CD4-positive, alpha-beta memory T cell (primary cell): ENCODE measurements at regions of chr17 and their contacts with region 1.

Region 1: DNA sequence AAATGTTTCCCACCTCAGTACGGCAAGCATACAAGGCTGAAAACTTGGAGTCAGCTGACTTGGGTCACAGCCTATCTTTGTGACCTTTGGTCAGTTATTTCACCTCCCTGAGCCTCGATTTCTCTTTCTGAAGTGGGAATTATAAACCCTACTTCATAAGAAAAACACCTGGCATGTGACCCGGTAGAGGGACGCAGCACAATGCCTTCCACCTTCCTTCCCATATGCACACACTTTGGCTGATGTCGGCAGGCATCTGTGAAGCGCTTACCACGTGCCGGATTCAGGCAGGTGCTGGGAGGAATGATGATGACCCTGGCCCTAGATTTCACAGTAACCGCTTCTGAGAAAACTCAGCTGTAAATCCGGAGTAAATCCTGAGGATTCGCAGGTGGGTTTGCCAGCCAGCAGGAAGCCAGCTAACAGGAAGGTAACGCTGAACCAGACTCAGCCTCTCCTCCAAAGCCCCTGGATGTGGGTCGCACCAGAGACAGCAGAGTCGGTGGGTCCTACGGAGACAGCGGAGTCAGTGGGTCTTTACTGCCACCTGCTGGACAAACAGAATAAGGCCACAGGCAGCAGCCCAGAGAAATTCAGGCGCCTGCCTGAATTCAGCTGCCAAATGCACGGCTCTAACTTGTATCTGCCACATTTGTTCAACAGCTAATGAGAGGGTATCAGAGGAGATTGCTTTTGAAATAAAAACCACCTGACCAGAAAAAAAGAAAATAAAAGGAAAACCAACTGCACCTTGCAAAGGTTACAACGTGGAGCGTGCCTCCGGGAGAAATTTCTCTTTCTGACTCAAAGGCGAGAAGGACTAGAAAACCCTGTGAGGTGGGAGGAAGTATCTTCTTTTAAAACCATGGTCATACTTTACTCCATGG is 16.6 kb downstream of the COPRS start:
- DNase-seq: peak; percentile 53 to 60 (median 58)
- H3K4me3 ChIP-seq: no peak overlapping the region
- H3K4me3 Mint-ChIP-seq: no peak overlapping the region
- H3K27ac ChIP-seq: no peak overlapping the region
- H3K27ac Mint-ChIP-seq: no peak overlapping the region
- H3K4me1 ChIP-seq: peaks cover 6% of the 10 kb centered on the region
- H3K4me1 Mint-ChIP-seq: no peaks in the 10 kb centered on the region
- H3K27me3 ChIP-seq: no peaks in the 10 kb centered on the region
- H3K27me3 Mint-ChIP-seq: peaks cover 8 to 17% of the 10 kb centered on the region in 2 donors

Region 2: GRCh38 chr17:31388770-31389661 is 453.4 kb before region 1 on chr17:
- CTCF ChIA-PET with region 1: interaction called, 19 read pairs
- POLR2A ChIA-PET with region 1: no interaction called
- intact Hi-C with region 1: no loop called
- DNase-seq: peak in 4 of 5 donors; percentile 21 to 40 (median 32)
- H3K4me3 ChIP-seq: no peak overlapping the region
- H3K4me3 Mint-ChIP-seq: no peak overlapping the region
- H3K27ac ChIP-seq: no peak overlapping the region
- H3K27ac Mint-ChIP-seq: no peak overlapping the region
- H3K4me1 ChIP-seq: peaks cover 9% of the 10 kb centered on the region
- H3K4me1 Mint-ChIP-seq: peaks cover 2 to 23% (median 5%) of the 10 kb centered on the region in 4 donors
- H3K27me3 ChIP-seq: peaks cover 8% of the 10 kb centered on the region
- H3K27me3 Mint-ChIP-seq: peaks cover 15 to 23% of the 10 kb centered on the region in 2 donors

Region 3: DNA sequence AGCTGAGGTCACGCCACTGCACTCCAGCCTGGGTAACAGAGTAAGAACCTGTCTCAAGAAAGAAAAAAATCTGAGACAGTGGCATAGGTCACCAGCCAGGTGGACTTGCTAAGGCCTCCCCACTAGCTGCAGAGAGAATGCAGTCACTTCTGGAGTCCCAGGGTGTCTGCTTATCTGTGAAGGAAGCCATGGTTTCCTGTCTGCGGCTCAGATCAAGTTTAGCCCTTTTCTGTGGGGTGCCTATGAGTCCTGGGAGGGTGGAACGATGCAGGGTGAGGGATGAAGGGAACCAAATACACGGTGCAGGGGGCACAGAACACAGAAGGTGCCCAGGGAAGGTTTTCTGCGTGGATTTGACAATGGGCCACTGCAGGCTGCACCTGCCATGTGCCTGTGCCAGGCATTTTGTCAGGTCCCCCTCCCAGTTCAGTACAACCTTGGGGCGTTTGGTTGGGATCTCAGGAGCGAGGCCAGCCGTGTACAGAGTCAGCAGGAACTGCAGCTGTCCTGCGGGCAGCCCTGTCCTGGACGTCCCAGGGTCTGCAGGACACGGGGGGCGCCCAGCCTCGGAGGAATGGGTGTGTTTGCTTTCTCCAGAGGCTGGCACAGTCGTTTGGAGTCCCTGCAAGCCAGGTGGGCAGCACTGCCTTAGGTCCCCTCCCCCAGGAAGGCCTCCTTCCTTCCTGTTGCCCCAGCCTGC is 409.2 kb before region 1 on chr17:
- CTCF ChIA-PET with region 1: interaction called, 27 read pairs
- POLR2A ChIA-PET with region 1: no interaction called
- intact Hi-C with region 1: no loop called
- DNase-seq: peak; percentile 36 to 74 (median 46)
- H3K4me3 ChIP-seq: no peak overlapping the region
- H3K4me3 Mint-ChIP-seq: peak overlapping the region in 5 of 8 donors; percentile 37 to 82 (median 55)
- H3K27ac ChIP-seq: no peak overlapping the region
- H3K27ac Mint-ChIP-seq: peak overlapping the region in 1 of 7 donors; percentile 82
- H3K4me1 ChIP-seq: peaks cover 18% of the 10 kb centered on the region
- H3K4me1 Mint-ChIP-seq: peaks cover 10 to 26% (median 17%) of the 10 kb centered on the region in 4 donors
- H3K27me3 ChIP-seq: no peaks in the 10 kb centered on the region
- H3K27me3 Mint-ChIP-seq: peaks cover 6 to 12% of the 10 kb centered on the region in 2 donors

Region 4: GRCh38 chr17:31533546-31534155 is 308.8 kb before region 1 on chr17:
- CTCF ChIA-PET with region 1: interaction called, 14 read pairs
- POLR2A ChIA-PET with region 1: no interaction called
- intact Hi-C with region 1: no loop called
- DNase-seq: no peak
- H3K4me3 ChIP-seq: no peak overlapping the region
- H3K4me3 Mint-ChIP-seq: no peak overlapping the region
- H3K27ac ChIP-seq: no peak overlapping the region
- H3K27ac Mint-ChIP-seq: peak overlapping the region in 3 of 7 donors; percentile 4 to 64 (median 33)
- H3K4me1 ChIP-seq: no peaks in the 10 kb centered on the region
- H3K4me1 Mint-ChIP-seq: peaks cover 0 to 11% (median 9%) of the 10 kb centered on the region in 4 donors
- H3K27me3 ChIP-seq: no peaks in the 10 kb centered on the region
- H3K27me3 Mint-ChIP-seq: no peaks in the 10 kb centered on the region

Region 5: DNA sequence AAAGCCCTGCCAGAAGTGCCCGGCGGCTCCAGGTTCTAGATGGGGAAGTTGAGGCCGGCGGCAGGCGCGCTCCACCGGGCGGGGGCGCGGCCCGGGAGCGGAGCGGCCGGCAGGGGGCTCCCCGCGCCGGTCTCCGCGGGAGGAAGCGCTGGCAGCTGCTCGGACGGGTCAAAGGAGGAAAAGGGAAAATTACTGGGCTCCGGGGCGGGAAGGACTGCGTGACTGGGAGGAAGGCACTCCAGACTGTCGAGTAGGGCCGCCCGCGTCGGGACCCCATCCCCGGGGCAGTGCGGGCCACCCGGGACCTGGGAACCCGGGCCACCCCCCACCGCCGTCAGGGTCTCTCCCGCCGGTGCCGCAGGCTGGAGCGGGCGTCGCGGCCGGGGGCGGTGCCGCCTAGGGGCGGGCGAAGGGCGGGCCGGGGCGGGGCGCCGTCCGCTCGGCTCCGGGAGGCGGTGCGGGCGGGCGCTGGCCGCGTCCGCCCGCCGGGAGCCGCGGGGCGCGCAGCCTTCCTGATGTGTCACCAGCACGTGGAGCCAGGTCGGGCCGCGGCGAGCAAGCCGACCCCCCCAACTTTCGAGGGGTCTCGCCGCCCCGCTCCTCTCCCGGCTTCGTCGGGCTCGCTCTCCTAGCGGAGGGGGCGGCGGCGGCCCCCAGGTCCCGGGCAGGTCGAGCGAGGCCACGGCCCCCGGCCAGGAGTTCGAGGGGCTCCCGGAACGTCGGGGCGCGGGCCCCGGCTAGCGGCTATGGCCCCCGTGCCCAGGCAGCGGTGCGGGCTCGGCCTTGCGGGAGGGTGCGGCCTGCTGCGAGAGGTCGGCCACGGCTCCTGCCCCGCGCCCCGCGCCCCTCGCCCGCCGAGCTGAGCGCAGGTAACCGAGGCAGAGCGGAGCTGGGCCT is 283.4 kb before region 1 on chr17:
- CTCF ChIA-PET with region 1: interaction called, 15 read pairs
- POLR2A ChIA-PET with region 1: no interaction called
- intact Hi-C with region 1: loop called (anchors 1 kb)
- DNase-seq: peak; percentile 32 to 47 (median 39)
- H3K4me3 ChIP-seq: peak overlapping the region; percentile 29 to 32
- H3K4me3 Mint-ChIP-seq: peak overlapping the region; percentile 61 to 85 (median 75)
- H3K27ac ChIP-seq: no peak overlapping the region
- H3K27ac Mint-ChIP-seq: peak overlapping the region in 2 of 7 donors; percentile 29 to 68
- H3K4me1 ChIP-seq: peaks cover 6% of the 10 kb centered on the region
- H3K4me1 Mint-ChIP-seq: peaks cover 1 to 20% (median 8%) of the 10 kb centered on the region in 4 donors
- H3K27me3 ChIP-seq: no peaks in the 10 kb centered on the region
- H3K27me3 Mint-ChIP-seq: peaks cover 3 to 5% of the 10 kb centered on the region in 2 donors

Region 6: DNA sequence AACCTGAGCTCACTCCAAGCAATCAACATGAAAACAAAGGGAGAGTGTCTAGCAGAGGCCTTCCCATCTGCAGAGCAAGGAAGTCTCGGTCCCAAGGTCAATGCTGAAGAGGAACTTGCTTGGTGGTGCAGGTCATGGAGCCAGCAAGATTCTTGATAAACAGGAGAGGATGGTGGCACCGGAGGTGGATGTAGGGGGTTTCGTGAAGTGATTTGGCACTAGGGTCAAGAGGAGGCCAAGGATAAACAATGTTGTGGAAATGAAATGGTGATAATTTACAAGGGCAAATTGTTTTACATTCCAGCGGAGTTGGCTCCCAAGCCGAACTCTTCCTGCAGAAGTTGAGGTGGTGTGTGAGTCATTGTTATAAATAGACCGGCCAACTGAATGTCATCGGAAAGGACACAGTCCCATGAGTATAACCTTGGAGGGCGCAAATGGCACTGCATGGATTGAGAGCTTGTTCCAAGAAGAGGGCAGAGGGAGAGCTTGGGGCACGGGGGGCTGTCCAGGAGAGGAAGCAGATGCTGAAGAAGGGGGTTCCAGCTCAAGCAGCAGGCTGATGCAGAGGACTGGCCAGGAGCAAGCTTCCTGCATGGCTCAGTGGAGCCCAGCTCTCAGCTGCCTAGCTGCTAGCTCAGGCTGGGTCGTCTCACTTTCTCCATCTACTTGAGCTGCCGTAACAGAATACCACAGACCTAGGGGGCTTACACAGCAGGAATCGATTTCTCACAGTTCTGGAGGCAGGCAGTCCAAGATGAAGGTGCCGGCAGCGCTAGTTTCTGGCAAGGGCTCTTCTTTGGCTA is 120.0 kb before region 1 on chr17:
- CTCF ChIA-PET with region 1: no interaction called
- POLR2A ChIA-PET with region 1: no interaction called
- intact Hi-C with region 1: no loop called
- DNase-seq: no peak
- H3K4me3 ChIP-seq: no peak overlapping the region
- H3K4me3 Mint-ChIP-seq: no peak overlapping the region
- H3K27ac ChIP-seq: no peak overlapping the region
- H3K27ac Mint-ChIP-seq: peak overlapping the region in 1 of 7 donors; percentile 41
- H3K4me1 ChIP-seq: no peaks in the 10 kb centered on the region
- H3K4me1 Mint-ChIP-seq: no peaks in the 10 kb centered on the region
- H3K27me3 ChIP-seq: no peaks in the 10 kb centered on the region
- H3K27me3 Mint-ChIP-seq: peaks cover 4 to 10% of the 10 kb centered on the region in 2 donors

Region 7: DNA sequence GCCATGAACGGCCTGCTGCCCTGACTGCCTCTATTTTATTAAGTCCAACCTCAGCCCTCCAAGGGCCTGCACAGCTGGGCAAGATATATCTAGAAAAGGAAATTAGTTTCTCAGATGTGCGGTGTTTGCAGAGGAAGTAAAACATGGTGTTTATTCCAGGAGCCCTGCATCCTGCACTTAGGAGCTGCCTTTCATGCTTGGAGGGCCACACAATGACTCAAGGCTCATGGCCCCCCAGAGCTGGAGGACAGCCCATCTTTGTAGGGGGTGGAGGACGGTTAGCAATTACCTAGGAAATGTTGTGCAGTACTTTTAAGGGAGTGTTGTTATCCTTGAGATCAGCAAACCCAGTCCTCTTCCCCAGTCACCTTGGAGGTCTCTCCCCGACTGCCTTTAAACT is 63.9 kb before region 1 on chr17:
- CTCF ChIA-PET with region 1: no interaction called
- POLR2A ChIA-PET with region 1: no interaction called
- intact Hi-C with region 1: no loop called
- DNase-seq: no peak
- H3K4me3 ChIP-seq: no peak overlapping the region
- H3K4me3 Mint-ChIP-seq: no peak overlapping the region
- H3K27ac ChIP-seq: no peak overlapping the region
- H3K27ac Mint-ChIP-seq: no peak overlapping the region
- H3K4me1 ChIP-seq: no peaks in the 10 kb centered on the region
- H3K4me1 Mint-ChIP-seq: no peaks in the 10 kb centered on the region
- H3K27me3 ChIP-seq: no peaks in the 10 kb centered on the region
- H3K27me3 Mint-ChIP-seq: peaks cover 15 to 21% of the 10 kb centered on the region in 2 donors

Region 8: DNA sequence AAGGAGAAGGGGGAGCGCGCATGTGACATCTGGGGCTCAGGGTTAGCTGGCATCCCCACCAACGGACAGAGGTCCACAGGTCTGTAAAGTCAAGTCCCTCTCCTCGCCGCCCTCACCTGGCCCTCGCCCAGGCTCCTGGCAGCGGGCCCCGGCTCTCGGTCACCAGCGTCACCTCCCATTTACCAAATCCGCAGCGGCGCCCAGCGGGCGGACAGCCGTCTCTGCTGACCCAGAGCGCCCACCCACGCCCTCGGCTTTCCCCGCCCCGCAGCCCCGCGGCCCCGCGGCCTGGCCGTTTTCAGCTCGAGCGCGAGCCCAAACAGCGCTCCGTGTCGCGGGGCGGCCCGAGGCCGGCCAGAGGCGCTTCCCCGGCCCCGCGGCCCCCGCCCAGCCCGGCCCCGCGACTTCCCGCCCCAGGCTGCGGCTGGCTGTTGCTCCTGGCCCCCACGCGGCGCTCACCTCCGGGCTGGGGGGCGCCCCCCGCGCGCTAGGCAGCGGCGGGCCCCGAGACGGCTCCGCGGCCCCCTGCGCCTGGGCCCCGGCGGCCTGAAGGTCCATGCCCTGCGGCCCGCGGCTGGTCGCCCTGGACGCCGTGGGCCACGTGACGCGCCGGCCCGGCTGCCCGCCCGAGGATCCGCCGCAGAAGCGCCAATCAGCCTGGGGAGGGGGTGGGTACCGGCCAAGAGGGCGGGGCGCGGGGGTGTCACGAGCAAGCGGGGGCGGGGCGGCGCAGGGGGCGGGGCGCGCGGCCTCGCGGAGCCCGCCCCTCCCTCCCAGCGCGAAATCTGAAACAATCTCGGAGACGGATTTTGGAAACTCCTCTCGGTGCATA is 16.4 kb after region 1 on chr17 and contains the start of gene COPRS:
- CTCF ChIA-PET with region 1: interaction called, 11 read pairs
- POLR2A ChIA-PET with region 1: no interaction called
- intact Hi-C with region 1: no loop called
- DNase-seq: peak; percentile 71 to 78 (median 74)
- H3K4me3 ChIP-seq: peak within 1 kb of the TSS in 1 of 2 donors; percentile 65
- H3K4me3 Mint-ChIP-seq: peak within 1 kb of the TSS; percentile 85 to 91 (median 87)
- H3K27ac ChIP-seq: peak within 1 kb of the TSS; percentile 26
- H3K27ac Mint-ChIP-seq: peak within 1 kb of the TSS; percentile 29 to 89 (median 79)
- H3K4me1 ChIP-seq: peaks cover 14% of the 10 kb centered on the region
- H3K4me1 Mint-ChIP-seq: peaks cover 12 to 22% (median 14%) of the 10 kb centered on the region in 4 donors
- H3K27me3 ChIP-seq: no peaks in the 10 kb centered on the region
- H3K27me3 Mint-ChIP-seq: no peaks in the 10 kb centered on the region
- total RNA-seq, gene COPRS: 3.3 to 3.6 TPM

Region 9: DNA sequence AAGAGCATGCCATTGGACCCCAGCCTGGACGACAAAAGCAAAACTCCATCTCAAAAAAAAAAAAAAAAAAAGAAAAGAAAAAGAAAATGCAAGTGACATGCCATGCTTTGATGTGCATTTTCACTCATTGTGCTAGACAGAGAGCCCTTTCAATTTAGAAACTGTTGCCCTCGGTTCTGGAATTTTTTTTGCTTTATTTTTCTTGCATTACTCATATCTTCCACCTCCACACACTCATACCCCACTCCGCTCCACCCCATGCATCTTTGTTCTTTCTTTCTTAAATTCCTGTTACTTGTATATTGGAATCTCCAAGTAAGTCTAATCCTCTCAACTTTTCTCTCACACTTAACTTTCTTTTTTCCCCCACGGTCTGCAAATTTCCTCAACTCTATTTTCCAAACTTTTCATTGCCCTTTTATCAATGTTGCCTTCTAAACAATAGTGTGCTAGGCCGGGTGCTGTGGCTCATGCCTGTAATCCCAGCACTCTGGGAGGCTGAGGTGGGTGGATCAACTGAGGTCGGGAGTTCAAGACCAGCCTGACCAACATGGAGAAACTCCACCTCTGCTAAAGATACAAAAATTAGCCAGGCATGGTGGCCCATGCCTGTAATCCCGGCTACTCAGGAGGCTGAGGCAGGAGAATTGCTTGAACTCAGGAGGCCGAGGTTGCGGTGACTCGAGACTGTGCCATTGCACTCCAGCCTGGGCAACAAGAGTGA is 77.5 kb after region 1 on chr17:
- CTCF ChIA-PET with region 1: no interaction called
- POLR2A ChIA-PET with region 1: no interaction called
- intact Hi-C with region 1: no loop called
- DNase-seq: no peak
- H3K4me3 ChIP-seq: no peak overlapping the region
- H3K4me3 Mint-ChIP-seq: no peak overlapping the region
- H3K27ac ChIP-seq: no peak overlapping the region
- H3K27ac Mint-ChIP-seq: peak overlapping the region in 1 of 7 donors; percentile 50
- H3K4me1 ChIP-seq: no peaks in the 10 kb centered on the region
- H3K4me1 Mint-ChIP-seq: peaks cover 0 to 5% (median 3%) of the 10 kb centered on the region in 4 donors
- H3K27me3 ChIP-seq: no peaks in the 10 kb centered on the region
- H3K27me3 Mint-ChIP-seq: peaks cover 15 to 22% of the 10 kb centered on the region in 2 donors

Region 10: GRCh38 chr17:32429598-32429997 is 587.2 kb after region 1 on chr17:
- CTCF ChIA-PET with region 1: no interaction called
- POLR2A ChIA-PET with region 1: no interaction called
- intact Hi-C with region 1: no loop called
- DNase-seq: no peak
- H3K4me3 ChIP-seq: no peak overlapping the region
- H3K4me3 Mint-ChIP-seq: no peak overlapping the region
- H3K27ac ChIP-seq: no peak overlapping the region
- H3K27ac Mint-ChIP-seq: no peak overlapping the region
- H3K4me1 ChIP-seq: no peaks in the 10 kb centered on the region
- H3K4me1 Mint-ChIP-seq: no peaks in the 10 kb centered on the region
- H3K27me3 ChIP-seq: no peaks in the 10 kb centered on the region
- H3K27me3 Mint-ChIP-seq: no peaks in the 10 kb centered on the region